ENCODE measurements at regions of chr5 and their contacts with region 1.

Region 1: DNA sequence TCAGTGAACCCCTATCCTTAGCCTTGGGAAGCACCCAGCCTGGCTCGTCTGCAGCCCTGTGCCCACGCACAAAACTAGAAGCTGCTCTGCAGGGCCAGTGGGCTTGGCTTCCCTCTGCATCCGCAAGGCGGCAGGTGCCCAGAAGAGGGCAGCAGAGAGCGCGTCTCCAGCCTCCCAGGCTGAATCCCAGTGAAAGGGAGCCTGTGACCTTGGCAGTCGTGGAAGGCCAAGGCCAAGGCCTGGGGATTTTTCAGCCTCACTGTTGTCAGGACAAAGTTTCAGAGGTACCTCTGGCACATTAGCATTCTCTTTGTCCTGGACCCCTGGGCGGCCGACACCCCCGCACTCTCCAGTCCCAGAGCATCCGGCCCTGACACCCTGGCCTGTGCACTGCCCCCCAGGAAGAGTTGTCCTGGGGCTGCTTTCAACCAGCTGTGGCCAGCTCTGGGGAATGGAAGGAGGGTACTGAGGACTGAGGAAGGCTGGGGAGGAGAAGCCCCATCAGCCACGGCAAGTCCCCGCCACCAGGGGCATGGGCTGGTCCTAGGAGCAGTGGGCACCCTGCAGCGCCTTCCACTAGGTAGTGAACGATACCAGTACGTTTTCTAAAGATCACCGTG is 63.6 kb upstream of the IL17B start:
- DNase-seq: peak; percentile 88
- ATAC-seq: peak; percentile 85
- H3K4me3 Mint-ChIP-seq: no peak overlapping the region
- H3K27ac Mint-ChIP-seq: no peak overlapping the region
- H3K4me1 Mint-ChIP-seq: peaks cover 22% of the 10 kb centered on the region
- H3K27me3 Mint-ChIP-seq: no peaks in the 10 kb centered on the region

Region 2: GRCh38 chr5:147509710-147510651 is 1932.7 kb before region 1 on chr5 and contains the start of gene DPYSL3:
- CTCF ChIA-PET with region 1: no interaction called
- POLR2A ChIA-PET with region 1: no interaction called
- intact Hi-C with region 1: no loop called
- DNase-seq: peak; percentile 28
- ATAC-seq: peak; percentile 44
- H3K4me3 Mint-ChIP-seq: no peak within 1 kb of the TSS
- H3K27ac Mint-ChIP-seq: no peak within 1 kb of the TSS
- H3K4me1 Mint-ChIP-seq: peaks cover 5% of the 10 kb centered on the region
- H3K27me3 Mint-ChIP-seq: peaks cover 43% of the 10 kb centered on the region
- total RNA-seq, gene DPYSL3: 0.16 to 0.18 TPM

Region 3: DNA sequence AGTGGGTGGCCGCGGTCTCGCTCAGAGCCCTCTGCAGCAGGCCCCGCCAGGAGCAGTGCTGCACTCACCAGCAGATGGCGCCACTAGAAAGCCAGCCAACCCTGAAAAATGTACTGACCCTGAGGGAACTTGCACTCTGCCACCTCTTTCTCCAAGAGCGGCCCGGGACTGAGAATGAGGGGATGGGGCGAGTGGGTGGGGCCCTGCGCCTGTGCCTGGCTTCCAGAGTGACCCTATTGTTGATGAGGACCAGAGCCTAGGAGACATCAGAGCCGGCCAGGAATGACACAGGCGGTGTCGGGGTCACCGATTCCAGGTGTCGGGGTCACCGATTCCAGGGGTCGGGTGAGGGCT is 60.7 kb before region 1 on chr5:
- CTCF ChIA-PET with region 1: interaction called, 16 read pairs
- POLR2A ChIA-PET with region 1: no interaction called
- intact Hi-C with region 1: no loop called
- DNase-seq: peak; percentile 87
- ATAC-seq: peak; percentile 97
- H3K4me3 Mint-ChIP-seq: no peak overlapping the region
- H3K27ac Mint-ChIP-seq: no peak overlapping the region
- H3K4me1 Mint-ChIP-seq: no peaks in the 10 kb centered on the region
- H3K27me3 Mint-ChIP-seq: no peaks in the 10 kb centered on the region

Region 4: DNA sequence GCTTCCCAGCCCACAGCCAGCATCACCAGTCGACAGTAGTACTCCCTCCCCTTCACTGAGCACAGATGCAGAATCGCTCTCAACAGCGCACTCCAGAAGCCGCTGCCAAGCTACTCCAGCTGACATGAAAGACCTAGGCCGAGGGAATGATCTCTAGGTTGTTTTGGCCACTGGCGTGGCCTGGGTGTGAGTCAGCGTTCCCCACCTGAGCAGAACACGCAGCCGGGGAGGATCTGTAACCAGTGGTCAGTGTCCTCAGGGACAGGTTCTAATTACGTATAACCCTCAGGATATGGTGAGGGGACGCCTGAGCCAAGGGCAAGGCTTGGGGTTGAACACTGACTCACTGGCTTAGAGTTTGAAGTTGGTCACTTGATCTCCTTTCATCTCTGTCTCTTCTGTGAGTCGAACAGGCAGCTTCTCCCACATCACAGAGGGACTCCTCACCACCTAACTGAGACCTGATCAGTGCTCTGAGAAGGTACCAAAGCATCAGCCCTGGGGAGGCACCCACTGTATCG is 13.3 kb after region 1 on chr5:
- CTCF ChIA-PET with region 1: interaction called, 11 read pairs
- POLR2A ChIA-PET with region 1: no interaction called
- intact Hi-C with region 1: no loop called
- DNase-seq: no peak
- ATAC-seq: peak; percentile 36
- H3K4me3 Mint-ChIP-seq: no peak overlapping the region
- H3K27ac Mint-ChIP-seq: no peak overlapping the region
- H3K4me1 Mint-ChIP-seq: no peaks in the 10 kb centered on the region
- H3K27me3 Mint-ChIP-seq: no peaks in the 10 kb centered on the region

Region 5: DNA sequence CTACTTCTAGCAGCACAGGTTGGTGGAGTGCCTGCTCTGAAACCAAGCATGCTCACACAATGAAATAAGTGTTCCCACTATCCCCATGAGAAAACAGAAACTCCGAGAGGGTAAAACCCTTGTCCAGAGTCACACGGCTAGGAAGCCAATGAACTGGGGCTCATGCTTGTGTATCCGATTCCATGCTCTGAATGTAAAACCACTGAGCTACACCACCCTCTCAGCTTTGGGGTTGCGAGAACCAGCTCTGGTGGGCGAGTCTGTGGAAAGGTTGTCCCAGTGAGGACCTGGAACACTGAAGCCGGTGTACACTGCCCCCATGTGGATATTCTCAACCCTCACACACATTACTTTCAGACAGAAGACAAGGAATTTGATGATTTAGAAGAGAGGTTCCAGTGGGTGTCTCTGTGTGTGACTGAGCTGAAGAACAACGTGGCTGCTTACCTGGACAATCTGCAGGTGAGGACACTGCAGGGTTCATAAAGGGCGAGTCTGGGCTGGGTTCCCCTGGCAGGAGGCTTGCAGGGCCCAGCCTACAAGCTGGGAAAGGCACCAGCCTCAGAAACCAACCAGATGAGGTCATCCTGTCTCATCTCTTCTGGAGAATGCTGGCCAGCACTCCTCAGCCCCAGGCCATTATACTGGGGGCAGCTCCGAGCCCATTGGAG is 176.0 kb after region 1 on chr5:
- CTCF ChIA-PET with region 1: interaction called, 4 read pairs
- POLR2A ChIA-PET with region 1: no interaction called
- intact Hi-C with region 1: loop called in 1 of 2 experiments (anchors 2 kb)
- DNase-seq: peak; percentile 60
- ATAC-seq: peak; percentile 63
- H3K4me3 Mint-ChIP-seq: no peak overlapping the region
- H3K27ac Mint-ChIP-seq: peak overlapping the region; percentile 13
- H3K4me1 Mint-ChIP-seq: peaks cover 7% of the 10 kb centered on the region
- H3K27me3 Mint-ChIP-seq: no peaks in the 10 kb centered on the region

Measured in activated CD4-positive, alpha-beta T cell treated with anti-CD3 and anti-CD28 coated beads for 36 hours (primary cell).